HEK293 (cell line): ENCODE measurements at regions of chr19 and their contacts with region 1.

Region 1: DNA sequence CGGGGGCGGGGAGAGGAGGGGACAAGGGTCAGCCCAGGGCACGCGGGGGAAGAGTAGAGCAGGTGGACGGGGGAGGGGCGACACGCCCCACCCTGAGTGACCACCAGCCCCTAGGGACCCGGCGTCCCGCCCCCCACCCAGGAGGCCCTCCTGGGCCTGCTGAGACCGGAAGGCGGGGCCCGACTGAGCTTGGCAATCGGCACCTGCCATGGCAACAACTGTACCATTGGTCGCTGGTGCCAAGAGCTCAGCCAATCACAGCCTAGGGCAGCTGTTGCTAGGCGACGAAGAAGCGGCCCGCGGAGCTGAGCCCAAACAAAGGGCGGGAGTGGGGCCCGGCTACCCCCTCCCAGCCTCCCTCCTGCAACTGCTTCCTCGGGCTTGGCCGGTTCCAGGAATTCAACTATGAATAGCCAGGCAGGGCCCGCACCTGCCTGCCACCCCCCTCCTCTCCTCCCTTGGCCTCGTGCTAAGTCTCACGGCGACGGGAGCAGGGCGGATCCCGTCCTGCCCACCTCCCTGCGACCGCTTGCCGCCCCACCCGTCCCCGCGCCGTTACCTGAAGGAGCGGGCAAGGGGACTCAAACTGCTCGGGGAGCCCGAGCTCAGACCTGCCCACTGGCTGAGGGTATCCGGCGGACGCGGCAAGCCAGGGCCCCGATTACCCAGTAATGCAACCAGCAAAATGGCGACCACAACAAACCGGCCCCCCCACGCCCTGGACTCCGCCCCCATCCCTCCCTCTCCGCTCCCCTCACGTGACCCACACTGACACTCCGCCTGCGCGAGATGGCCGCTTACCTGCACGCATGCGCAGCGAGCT is at the start of gene DYRK1B:
- H3K4me3 ChIP-seq: peak within 1 kb of the TSS; percentile 64
- H3K27ac ChIP-seq: peak within 1 kb of the TSS; percentile 95
- H3K4me1 ChIP-seq: peaks cover 18% of the 10 kb centered on the region
- CTCF ChIP-seq: peak; percentile 5; the same call in 1 of the 2 replicates

Region 2: DNA sequence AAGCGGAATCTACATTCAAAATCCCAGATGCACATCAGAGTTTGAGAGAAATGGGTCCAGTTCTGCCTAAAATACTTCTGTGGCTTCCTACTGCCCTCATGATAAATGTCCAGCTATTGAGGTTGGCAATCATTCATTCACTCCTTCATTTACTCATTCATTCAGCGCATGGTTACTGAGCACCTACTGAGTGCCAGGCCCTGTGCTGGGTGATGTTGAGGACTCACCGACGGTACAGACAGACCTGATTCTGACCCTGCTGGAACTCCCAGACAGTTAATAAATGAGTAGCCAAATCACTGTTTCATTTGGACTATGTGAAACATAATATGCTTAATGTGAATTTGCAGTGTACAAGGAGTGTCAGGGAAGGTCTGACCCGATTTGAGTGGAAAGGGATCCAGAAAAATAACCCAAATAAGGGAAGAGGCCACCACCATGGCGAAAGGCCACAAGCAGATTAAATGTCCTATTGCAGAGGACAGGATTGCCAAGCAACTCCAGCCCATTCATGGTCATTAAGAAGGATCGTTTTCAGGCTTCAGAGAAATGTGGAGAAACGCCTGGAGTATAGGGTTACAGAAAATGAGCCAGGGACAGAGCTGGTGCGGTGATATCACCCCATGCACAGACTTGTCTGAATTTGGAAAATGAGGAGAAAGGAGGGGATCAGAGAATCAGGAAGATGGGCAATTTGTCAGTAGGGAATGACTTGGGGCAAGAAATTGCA is 20.2 kb before region 1 on chr19:
- CTCF ChIA-PET with region 1: no interaction called
- POLR2A ChIA-PET with region 1: interaction called, 16 read pairs
- H3K4me3 ChIP-seq: no peak overlapping the region
- H3K27ac ChIP-seq: 0 out of 2 replicates have a peak overlapping the region, but pooled peaks have one; percentile 53
- H3K4me1 ChIP-seq: peaks cover 11% of the 10 kb centered on the region
- CTCF ChIP-seq: no peak

Region 3: GRCh38 chr19:39889872-39890545 is 56.3 kb after region 1 on chr19:
- CTCF ChIA-PET with region 1: no interaction called
- POLR2A ChIA-PET with region 1: no interaction called
- H3K4me3 ChIP-seq: no peak overlapping the region
- H3K27ac ChIP-seq: no peak overlapping the region
- H3K4me1 ChIP-seq: no peaks in the 10 kb centered on the region
- CTCF ChIP-seq: no peak